ENCODE measurements at regions of chr3 and their contacts with region 1.

Region 1: DNA sequence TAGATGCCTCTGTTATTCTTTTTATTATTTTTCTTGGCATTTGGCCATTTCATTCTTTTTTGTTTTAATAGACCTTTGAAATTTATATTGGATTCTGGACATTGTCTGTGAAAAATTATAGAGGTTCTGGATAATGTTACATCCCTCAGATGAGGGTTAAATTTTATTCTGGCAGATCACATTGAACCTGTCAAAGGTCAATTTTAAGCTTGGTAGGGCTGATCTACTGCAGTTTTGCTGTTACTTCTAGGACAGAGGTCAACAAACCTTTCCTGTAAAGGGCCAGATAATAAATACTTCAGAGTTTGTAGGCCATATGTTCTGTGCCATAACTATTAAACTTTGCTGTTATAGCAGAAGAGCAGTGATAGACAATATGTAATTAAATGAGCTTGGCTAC is 318.9 kb upstream of the DPPA4 start:
- DNase-seq: no peak
- H3K4me3 ChIP-seq: no peak overlapping the region
- H3K27ac ChIP-seq: no peak overlapping the region
- H3K4me1 ChIP-seq: no peaks in the 10 kb centered on the region
- CTCF ChIP-seq: no peak

Region 2: DNA sequence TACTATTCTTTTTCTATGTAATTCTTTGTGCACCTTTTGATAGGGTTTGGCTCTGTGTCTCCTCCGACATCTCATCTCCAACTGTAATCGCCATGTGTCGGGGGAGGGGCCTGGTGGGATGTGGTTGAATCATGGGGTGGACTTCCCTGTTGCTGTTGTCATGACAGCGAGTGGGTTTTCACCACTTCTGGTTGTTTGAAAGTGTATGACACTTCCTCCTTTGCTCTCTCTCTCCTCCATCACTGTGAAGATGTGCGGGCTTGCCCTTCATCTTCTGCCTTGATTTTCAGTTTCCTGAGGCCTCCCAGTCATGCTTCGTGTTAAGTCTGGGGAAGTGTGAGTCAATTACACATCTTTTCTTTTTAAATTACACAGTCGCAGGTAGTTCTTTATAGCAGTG is 93.1 kb before region 1 on chr3:
- CTCF ChIA-PET with region 1: no interaction called
- POLR2A ChIA-PET with region 1: no interaction called
- intact Hi-C with region 1: no loop called
- DNase-seq: no peak
- H3K4me3 ChIP-seq: no peak overlapping the region
- H3K27ac ChIP-seq: no peak overlapping the region
- H3K4me1 ChIP-seq: no peaks in the 10 kb centered on the region
- CTCF ChIP-seq: no peak

Region 3: GRCh38 chr3:110925798-110926197 is 1269.6 kb after region 1 on chr3:
- CTCF ChIA-PET with region 1: no interaction called
- POLR2A ChIA-PET with region 1: interaction called, 10 read pairs
- intact Hi-C with region 1: no loop called
- DNase-seq: no peak
- H3K4me3 ChIP-seq: no peak overlapping the region
- H3K27ac ChIP-seq: no peak overlapping the region
- H3K4me1 ChIP-seq: no peaks in the 10 kb centered on the region
- CTCF ChIP-seq: no peak

Measured in OCI-LY7 (cell line).